Heart left ventricle (tissue), 16 donors: ENCODE measurements at regions of chr14 and their contacts with region 1.

Region 1: DNA sequence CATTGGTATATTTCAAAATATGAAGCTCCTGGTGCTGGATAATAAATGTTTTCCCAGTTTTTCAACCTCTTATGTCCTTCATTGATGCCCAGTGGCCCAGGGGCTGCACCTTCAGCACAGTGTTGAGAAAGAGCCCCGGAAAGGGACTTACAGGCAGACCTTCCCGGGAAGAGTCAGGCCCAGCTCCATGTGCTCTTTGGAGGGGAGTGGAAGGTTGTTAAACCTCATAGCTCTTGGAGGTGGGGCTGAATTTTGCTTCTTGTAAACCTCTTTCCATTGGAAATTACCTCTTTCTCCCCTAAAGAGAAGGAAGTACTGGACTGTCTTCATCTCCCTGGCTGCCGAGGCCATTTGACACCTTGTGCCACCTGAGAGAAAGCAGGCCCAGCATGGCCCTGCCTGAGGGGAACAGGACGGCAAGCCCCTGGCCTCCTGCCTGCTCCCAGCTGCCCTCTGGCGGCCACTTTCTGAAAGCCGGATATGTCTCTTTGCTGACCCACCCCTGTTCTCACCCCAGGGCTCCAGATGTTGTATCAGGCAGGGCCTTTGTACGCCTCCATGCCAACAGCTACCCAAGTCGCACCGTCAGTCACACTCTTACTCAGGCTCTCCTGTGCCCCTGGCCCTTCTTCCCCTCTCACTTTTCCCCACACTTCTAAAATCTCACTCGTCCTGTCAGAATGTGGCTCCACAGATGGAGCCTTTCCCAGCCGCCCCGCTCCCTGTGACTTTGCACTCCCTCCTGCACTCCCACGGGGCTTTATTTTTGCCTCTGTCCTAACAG is 43.0 kb downstream of the EVL start:
- DNase-seq: peak; percentile 83 to 91 (median 85)
- ATAC-seq: peak; percentile 60 to 88 (median 80)
- H3K4me3 ChIP-seq: no peak overlapping the region
- H3K27ac ChIP-seq: peak overlapping the region in 9 of 12 donors; percentile 2 to 67 (median 37)
- H3K4me1 ChIP-seq: peaks cover 0 to 64% (median 47%) of the 10 kb centered on the region in 12 donors
- H3K27me3 ChIP-seq: no peaks in the 10 kb centered on the region
- CTCF ChIP-seq: peak; percentile 82 to 97 (median 90)
- POLR2A ChIP-seq: no peak

Region 2: DNA sequence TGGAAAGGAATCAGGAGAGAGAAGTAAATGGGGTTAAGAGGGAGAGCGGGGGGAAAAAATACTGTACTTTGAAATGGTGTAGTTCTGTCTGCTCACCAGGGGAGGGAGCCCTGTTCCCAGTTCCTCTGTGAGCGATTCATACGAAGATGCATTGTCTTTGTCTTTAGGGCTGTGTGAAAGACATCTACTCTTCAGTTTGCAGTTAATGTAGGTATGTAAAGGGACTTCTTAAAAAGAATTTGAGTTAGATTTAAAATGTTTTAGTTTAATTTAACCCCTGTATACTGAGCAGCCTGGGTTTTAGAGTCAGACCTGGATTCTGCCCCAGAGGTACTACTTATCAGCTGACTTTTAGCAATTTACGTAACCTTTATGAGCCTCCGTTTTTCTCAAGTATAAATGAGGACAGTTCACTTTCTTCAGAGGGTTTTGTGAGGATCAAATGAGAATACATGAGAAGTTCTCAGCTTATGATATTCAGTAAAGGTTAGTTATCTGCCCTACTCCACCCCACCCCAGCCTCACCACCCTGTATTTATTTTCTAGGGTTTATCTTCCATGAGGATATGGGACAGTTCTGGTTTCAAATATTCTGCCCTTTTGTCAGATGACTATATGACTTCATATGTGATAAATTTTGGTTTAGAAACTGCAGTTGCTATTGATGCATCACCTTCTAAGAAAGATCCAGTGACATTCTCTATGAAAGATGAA is 125.5 kb before region 1 on chr14:
- intact Hi-C with region 1: loop called (anchors 1 to 5 kb)
- DNase-seq: peak in 3 of 5 donors; percentile 48 to 59 (median 57)
- ATAC-seq: peak; percentile 77 to 92 (median 89)
- H3K4me3 ChIP-seq: no peak overlapping the region
- H3K27ac ChIP-seq: no peak overlapping the region
- H3K4me1 ChIP-seq: peaks cover 0 to 20% (median 2%) of the 10 kb centered on the region in 12 donors
- H3K27me3 ChIP-seq: no peaks in the 10 kb centered on the region
- CTCF ChIP-seq: peak; percentile 78 to 94 (median 90)
- POLR2A ChIP-seq: no peak

Region 3: DNA sequence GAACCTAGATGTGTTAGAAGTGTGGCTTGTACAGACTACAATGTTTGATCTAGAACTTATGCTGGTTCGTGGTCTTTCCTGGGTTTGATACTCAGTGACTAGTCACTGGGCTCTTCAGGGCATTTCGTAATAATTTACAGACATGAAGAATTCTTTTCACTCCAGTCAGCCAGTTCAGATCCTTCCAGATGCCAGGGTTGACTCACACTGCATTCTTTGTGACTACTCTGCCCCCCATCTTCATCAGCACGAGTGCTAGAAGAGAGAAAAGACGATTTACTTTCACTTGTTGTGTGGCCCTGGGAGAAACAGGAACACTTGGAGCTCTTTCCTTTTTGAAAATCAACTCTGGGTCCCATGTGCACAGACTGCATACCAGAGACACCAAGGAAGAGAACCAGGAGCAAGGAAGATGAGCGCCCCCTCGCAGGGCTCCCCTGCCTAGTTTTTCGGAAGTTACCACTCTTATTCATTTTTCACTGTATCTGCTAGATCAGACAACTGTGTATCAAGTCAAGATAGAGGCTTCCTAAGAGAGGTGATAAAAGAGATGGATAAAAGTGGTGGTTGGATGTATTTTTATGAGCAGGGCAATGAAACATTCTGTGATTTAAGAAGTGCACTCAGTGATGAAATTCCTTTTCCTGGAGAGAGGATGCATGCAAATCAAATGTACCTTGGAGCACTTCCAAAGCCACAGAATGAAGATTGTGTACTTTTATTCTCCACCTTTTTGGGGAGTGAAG is 76.5 kb before region 1 on chr14:
- intact Hi-C with region 1: loop called in 1 of 10 experiments (anchors 10 kb)
- DNase-seq: peak in 2 of 5 donors; percentile 34 to 35
- ATAC-seq: peak; percentile 4 to 88 (median 73)
- H3K4me3 ChIP-seq: peak overlapping the region in 3 of 12 donors; percentile 1 to 27 (median 3)
- H3K27ac ChIP-seq: peak overlapping the region in 4 of 12 donors; percentile 10 to 54 (median 42)
- H3K4me1 ChIP-seq: peaks cover 0 to 34% (median 17%) of the 10 kb centered on the region in 12 donors
- H3K27me3 ChIP-seq: no peaks in the 10 kb centered on the region
- CTCF ChIP-seq: no peak
- POLR2A ChIP-seq: no peak

Region 4: GRCh38 chr14:100056964-100057795 is 51.1 kb before region 1 on chr14:
- intact Hi-C with region 1: loop called in 2 of 10 experiments (anchors 5 kb)
- DNase-seq: no peak
- ATAC-seq: peak; percentile 44 to 65 (median 52)
- H3K4me3 ChIP-seq: no peak overlapping the region
- H3K27ac ChIP-seq: peak overlapping the region in 8 of 12 donors; percentile 1 to 46 (median 24)
- H3K4me1 ChIP-seq: peaks cover 0 to 45% (median 12%) of the 10 kb centered on the region in 12 donors
- H3K27me3 ChIP-seq: no peaks in the 10 kb centered on the region
- CTCF ChIP-seq: peak in 10 of 12 donors; percentile 7 to 45 (median 30)
- POLR2A ChIP-seq: no peak

Region 5: DNA sequence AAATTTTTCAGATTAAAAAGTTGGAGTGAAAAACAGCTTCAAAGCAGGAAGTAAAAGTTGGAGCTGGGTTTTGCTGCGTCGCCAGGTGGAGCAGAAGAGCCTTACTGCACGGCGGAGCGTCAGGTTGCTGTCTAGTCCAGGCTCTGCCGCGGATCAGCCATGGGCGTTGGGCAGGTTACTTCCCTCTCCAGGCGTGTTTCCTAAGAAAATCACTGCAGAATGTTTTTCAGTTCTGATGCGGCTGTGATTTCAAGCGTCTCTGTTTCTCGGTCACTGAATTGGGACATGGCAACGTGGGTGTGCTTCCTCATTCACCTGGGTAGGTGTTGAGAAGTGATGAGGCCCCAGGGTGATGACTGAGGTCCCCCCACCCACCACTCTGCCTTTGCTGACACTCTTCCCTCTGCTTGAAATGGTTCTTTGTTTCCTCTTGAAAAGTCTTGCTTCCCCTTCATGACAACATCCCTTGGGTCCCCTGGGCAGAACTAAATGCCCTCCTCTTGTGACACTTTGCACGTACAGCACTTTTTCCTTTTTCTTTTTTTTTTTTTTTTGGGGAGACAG is 35.4 kb before region 1 on chr14:
- intact Hi-C with region 1: loop called in 2 of 10 experiments (anchors 5 kb)
- DNase-seq: no peak
- ATAC-seq: no peak
- H3K4me3 ChIP-seq: peak overlapping the region in 1 of 12 donors; percentile 28
- H3K27ac ChIP-seq: peak overlapping the region in 1 of 12 donors; percentile 72
- H3K4me1 ChIP-seq: peaks cover 0 to 76% (median 15%) of the 10 kb centered on the region in 12 donors
- H3K27me3 ChIP-seq: no peaks in the 10 kb centered on the region
- CTCF ChIP-seq: no peak
- POLR2A ChIP-seq: no peak

Region 6: DNA sequence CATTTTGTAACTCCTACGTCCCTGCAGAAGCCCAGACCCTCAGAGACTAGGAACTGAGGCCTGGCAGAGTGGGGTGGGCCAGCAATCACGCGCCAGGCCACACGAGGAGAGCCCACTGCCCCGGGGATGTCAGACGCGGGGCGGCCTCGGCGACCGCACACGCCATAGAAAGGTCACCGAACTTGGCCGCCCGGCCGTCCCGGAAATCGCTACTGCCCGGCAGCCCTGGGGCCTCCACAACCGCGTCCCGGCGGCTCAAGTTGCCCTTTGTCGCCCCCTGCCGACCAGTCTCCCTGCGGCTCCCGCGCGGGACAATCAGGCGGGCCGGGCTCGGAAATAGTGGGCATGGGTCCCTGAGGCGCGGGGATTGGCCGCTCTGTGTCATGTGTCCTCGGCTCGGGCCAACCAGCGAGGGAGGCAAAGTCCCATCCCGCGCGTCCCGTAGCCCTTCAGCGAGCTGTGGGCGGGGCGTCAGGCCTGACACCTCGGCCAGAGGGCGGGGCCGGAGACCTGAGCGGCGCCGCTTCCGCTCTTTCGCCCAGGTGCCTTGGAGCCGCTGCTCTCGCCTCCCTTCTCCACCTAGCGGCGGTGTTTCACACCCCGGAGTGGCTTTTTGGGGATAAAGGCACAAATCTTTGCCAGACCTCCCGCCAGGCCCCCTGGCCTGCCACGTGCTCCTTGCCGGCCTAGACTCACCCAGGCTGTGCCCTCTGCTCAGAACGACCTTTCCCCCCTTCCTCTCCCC is 84.6 kb after region 1 on chr14:
- intact Hi-C with region 1: loop called in 6 of 10 experiments (anchors 2 to 10 kb)
- DNase-seq: peak; percentile 99 to 100 (median 99)
- ATAC-seq: peak; percentile 99 to 100 (median 100)
- H3K4me3 ChIP-seq: peak overlapping the region in 11 of 12 donors; percentile 16 to 63 (median 52)
- H3K27ac ChIP-seq: peak overlapping the region; percentile 80 to 97 (median 90)
- H3K4me1 ChIP-seq: peaks cover 0 to 21% (median 14%) of the 10 kb centered on the region in 12 donors
- H3K27me3 ChIP-seq: no peaks in the 10 kb centered on the region
- CTCF ChIP-seq: peak; percentile 89 to 98 (median 96)
- POLR2A ChIP-seq: peak in 1 of 2 donors; percentile 58

Region 7: GRCh38 chr14:100246826-100247428 is 138.7 kb after region 1 on chr14:
- intact Hi-C with region 1: no loop called
- DNase-seq: no peak
- ATAC-seq: peak in 3 of 4 donors; percentile 46 to 61 (median 61)
- H3K4me3 ChIP-seq: no peak overlapping the region
- H3K27ac ChIP-seq: peak overlapping the region in 1 of 12 donors; percentile 6
- H3K4me1 ChIP-seq: peaks cover 12 to 86% (median 66%) of the 10 kb centered on the region in 12 donors
- H3K27me3 ChIP-seq: no peaks in the 10 kb centered on the region
- CTCF ChIP-seq: peak; percentile 37 to 71 (median 56)
- POLR2A ChIP-seq: no peak